ENCODE measurements at regions of chr10 and their contacts with region 1.

Region 1: DNA sequence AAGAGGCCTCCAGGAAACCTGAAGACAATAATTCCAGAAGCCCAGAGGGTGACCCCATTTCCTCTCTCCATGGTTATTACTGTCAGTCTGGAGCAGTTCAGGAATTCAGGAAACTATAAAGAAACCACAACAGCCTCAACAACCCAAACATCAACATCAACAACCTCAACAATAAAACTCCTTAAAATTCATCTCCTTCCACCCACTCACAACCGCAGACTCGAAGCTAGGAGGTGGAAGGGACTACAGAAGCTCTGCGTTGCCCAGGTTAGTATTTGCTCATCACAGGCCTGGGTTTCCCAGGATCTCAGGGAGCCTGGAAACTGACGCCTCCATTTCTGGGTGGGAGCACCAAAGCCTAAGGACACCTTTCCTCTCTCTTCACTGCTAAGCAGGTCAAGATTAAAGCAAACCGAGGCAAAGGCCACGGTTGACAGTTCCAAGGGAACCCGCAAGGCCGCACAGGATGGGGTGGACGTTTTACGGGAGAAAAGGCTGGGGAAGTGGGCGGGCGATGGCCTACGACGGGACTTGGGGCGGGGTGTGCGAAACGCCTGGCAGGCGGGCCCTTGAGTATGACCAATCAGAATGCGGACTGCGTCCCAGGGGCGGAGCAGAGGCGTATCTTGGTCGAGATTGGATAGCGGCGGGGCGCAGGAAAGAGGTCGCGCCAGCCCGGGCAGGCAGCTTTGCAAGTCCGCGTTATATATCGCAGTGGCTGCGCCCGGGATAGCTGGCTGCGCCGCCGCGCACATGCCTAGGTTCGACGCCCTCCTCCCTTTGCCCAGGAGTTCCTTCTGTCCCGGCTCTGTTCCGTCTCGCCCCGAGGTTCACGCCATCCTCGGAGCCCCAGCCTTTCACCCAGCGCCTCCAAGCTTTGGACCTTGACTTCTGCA is at the start of gene ELOVL3:
- DNase-seq: peak; percentile 97
- H3K4me3 ChIP-seq: no peak within 1 kb of the TSS
- H3K27ac ChIP-seq: no peak within 1 kb of the TSS
- H3K4me1 ChIP-seq: peaks cover 12% of the 10 kb centered on the region
- H3K27me3 ChIP-seq: peaks cover 54 to 59% of the 10 kb centered on the region in 2 experiments
- CTCF ChIP-seq: no peak
- POLR2A ChIP-seq: no peak
- total RNA-seq, gene ELOVL3: not detected in 2 replicates

Region 2: GRCh38 chr10:102268375-102268888 is 42.5 kb after region 1 on chr10:
- CTCF ChIA-PET with region 1: interaction called, 31 read pairs
- POLR2A ChIA-PET with region 1: no interaction called
- dilution Hi-C with region 1: no loop called
- intact Hi-C with region 1: no loop called
- DNase-seq: peak; percentile 31
- H3K4me3 ChIP-seq: no peak overlapping the region
- H3K27ac ChIP-seq: no peak overlapping the region
- H3K4me1 ChIP-seq: peaks cover 7% of the 10 kb centered on the region
- H3K27me3 ChIP-seq: no peaks in the 10 kb centered on the region
- CTCF ChIP-seq: no peak
- POLR2A ChIP-seq: no peak

Region 3: GRCh38 chr10:102352066-102352715 is 126.3 kb after region 1 on chr10:
- CTCF ChIA-PET with region 1: interaction called, 1,402 read pairs
- POLR2A ChIA-PET with region 1: interaction called, 4 read pairs
- dilution Hi-C with region 1: loop called (anchors 25 kb)
- intact Hi-C with region 1: loop called (anchors 1 kb)
- DNase-seq: peak; percentile 58
- H3K4me3 ChIP-seq: no peak overlapping the region
- H3K27ac ChIP-seq: no peak overlapping the region
- H3K4me1 ChIP-seq: no peaks in the 10 kb centered on the region
- H3K27me3 ChIP-seq: no peaks in the 10 kb centered on the region
- CTCF ChIP-seq: peak; percentile 87 to 96
- POLR2A ChIP-seq: no peak

Region 4: DNA sequence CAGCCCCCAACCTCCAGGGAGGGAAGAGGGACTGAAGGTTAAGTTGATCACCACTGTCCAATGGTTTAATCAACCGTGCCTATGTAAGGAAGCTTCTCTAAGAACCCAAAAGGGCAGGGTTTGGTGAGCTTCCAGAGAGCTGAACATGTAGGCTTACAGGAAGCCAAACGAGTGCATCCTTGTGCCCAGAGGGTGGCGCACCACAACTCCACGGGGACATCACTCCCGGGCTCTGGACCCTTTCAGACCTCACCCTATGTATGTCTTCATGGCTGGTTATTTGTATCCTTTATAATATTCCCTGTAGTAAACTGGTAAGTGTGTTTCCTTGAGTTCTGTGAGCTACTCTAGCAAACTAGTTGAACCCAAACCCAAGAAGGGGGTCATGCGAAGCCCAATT is 158.2 kb after region 1 on chr10:
- CTCF ChIA-PET with region 1: interaction called, 20 read pairs
- POLR2A ChIA-PET with region 1: no interaction called
- dilution Hi-C with region 1: no loop called
- intact Hi-C with region 1: no loop called
- DNase-seq: no peak
- H3K4me3 ChIP-seq: no peak overlapping the region
- H3K27ac ChIP-seq: no peak overlapping the region
- H3K4me1 ChIP-seq: no peaks in the 10 kb centered on the region
- H3K27me3 ChIP-seq: no peaks in the 10 kb centered on the region
- CTCF ChIP-seq: peak in 1 of 2 donors; percentile 7
- POLR2A ChIP-seq: no peak

Region 5: DNA sequence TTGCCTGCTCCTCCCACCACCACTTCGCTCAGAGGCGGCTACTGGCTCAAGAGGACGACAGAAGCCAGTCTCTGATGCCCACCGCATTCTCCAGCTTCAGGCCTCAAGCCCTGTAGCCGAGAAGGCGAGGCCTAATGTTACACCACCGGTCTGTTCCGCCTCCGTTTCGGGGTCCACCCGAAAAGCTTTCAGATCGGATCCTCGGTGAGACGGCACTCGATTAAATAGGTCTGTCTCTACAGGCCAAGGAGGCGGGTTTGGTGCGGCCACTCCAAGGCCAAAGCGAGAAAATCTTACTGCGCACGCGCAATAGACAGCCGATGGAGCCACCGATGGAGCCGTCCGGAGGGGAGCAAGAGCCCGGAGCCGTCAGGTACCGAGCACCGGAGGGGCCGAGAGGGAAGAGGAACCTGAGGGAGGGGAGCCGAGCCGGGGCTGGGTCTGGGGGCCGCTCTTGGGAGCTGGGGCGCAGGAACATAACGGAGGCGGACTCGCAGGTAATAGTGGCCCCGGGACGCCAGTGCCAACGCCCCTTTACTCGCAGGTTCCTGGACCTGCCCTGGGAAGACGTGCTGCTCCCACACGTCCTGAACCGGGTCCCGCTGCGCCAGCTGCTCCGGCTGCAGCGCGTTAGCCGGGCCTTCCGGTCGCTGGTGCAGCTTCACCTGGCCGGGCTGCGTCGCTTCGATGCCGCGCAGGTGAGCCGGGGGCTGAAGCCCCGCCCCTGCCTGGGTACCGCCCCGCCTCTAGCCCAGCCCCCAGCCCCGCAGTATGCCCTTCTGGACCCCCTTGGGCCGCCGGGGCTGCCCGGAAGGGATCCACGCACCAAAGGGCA is 195.1 kb after region 1 on chr10 and contains the start of gene FBXL15:
- CTCF ChIA-PET with region 1: interaction called, 74 read pairs
- POLR2A ChIA-PET with region 1: no interaction called
- dilution Hi-C with region 1: no loop called
- intact Hi-C with region 1: loop called (anchors 1 kb)
- DNase-seq: peak; percentile 96
- H3K4me3 ChIP-seq: peak within 1 kb of the TSS; percentile 64 to 73 (median 70)
- H3K27ac ChIP-seq: no peak within 1 kb of the TSS
- H3K4me1 ChIP-seq: peaks cover 20% of the 10 kb centered on the region
- H3K27me3 ChIP-seq: peaks cover 3 to 7% of the 10 kb centered on the region in 2 experiments
- CTCF ChIP-seq: no peak
- POLR2A ChIP-seq: peak; percentile 27
- total RNA-seq, gene FBXL15: 9.9 and 10.7 TPM in 2 replicates

Measured in endothelial cell of umbilical vein (primary cell).